Activated naive CD4-positive, alpha-beta T cell treated with anti-CD3 and anti-CD28 coated beads for 36 hours (primary cell): ENCODE measurements at regions of chr1 and their contacts with region 1.

Region 1: GRCh38 chr1:41516168-41517061 is 31.9 kb upstream of the EDN2 start:
- DNase-seq: peak; percentile 76
- H3K4me3 Mint-ChIP-seq: no peak overlapping the region
- H3K27ac Mint-ChIP-seq: no peak overlapping the region
- H3K4me1 Mint-ChIP-seq: peaks cover 9% of the 10 kb centered on the region
- H3K27me3 Mint-ChIP-seq: no peaks in the 10 kb centered on the region

Region 2: GRCh38 chr1:41528106-41528505 is 11.7 kb after region 1 on chr1:
- CTCF ChIA-PET with region 1: no interaction called
- intact Hi-C with region 1: no loop called
- DNase-seq: no peak
- H3K4me3 Mint-ChIP-seq: no peak overlapping the region
- H3K27ac Mint-ChIP-seq: no peak overlapping the region
- H3K4me1 Mint-ChIP-seq: no peaks in the 10 kb centered on the region
- H3K27me3 Mint-ChIP-seq: no peaks in the 10 kb centered on the region

Region 3: GRCh38 chr1:41573785-41574713 is 57.6 kb after region 1 on chr1:
- CTCF ChIA-PET with region 1: interaction called, 5 read pairs
- intact Hi-C with region 1: loop called (anchors 5 kb)
- DNase-seq: peak; percentile 92
- H3K4me3 Mint-ChIP-seq: no peak overlapping the region
- H3K27ac Mint-ChIP-seq: peak overlapping the region; percentile 20
- H3K4me1 Mint-ChIP-seq: peaks cover 42% of the 10 kb centered on the region
- H3K27me3 Mint-ChIP-seq: no peaks in the 10 kb centered on the region

Region 4: GRCh38 chr1:41868599-41868998 is 352.2 kb after region 1 on chr1:
- CTCF ChIA-PET with region 1: interaction called, 3 read pairs
- intact Hi-C with region 1: loop called (anchors 10 kb)
- DNase-seq: peak; percentile 58
- H3K4me3 Mint-ChIP-seq: no peak overlapping the region
- H3K27ac Mint-ChIP-seq: no peak overlapping the region
- H3K4me1 Mint-ChIP-seq: peaks cover 34% of the 10 kb centered on the region
- H3K27me3 Mint-ChIP-seq: no peaks in the 10 kb centered on the region